Activated T-helper 1 cell treated with anti-CD3 and anti-CD28 coated beads, Interleukin-12 subunit alpha, Interleukin-12 subunit beta, Interleukin-2, Interleukin-4 antibody, amounts not matched to agents 30 ng/mL and 10 ng/mL and 1 ng/mL, durations not matched to agents 14 hours and 24 hours and 36 hours (primary cell): ENCODE measurements at regions of chr11 and their contacts with region 1.

Region 1: DNA sequence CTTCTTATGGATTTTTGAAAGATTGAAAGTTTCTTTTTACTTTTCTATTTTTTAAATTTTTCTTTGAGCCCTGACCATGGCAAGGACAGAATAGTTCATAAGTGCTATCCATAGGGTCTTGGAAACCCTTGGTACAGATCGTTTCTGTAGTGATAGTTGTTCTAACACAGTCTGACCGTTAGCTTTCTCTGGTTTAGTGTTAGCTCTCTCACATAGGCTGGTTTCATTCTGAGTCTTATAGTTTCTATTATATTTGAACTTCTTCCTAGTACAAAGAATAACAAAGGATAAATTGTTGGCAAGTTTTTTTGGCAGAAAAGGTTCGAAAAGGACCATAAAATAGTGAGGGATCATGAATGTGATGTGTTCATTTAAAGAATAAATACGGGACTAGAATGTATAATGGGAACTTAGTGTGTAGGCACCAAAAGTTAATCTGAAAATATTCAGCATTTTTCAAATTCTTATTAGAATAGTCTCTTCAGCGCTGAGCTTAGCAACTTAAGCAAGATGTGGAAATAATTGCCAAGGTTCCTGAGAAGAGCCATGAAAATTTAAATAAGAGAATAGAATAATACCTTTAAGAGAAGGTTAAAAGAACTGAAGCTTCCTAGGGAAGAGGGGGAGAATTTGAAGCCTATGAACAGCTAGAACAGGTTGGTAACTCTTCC is 24.1 kb downstream of the FDX1 start:
- DNase-seq: no peak
- H3K4me3 Mint-ChIP-seq: peak overlapping the region; percentile 17
- H3K27ac Mint-ChIP-seq: peak overlapping the region; percentile 51
- H3K4me1 Mint-ChIP-seq: peaks cover 52% of the 10 kb centered on the region
- H3K27me3 Mint-ChIP-seq: no peaks in the 10 kb centered on the region

Region 2: GRCh38 chr11:109960831-109961230 is 493.0 kb before region 1 on chr11:
- intact Hi-C with region 1: no loop called
- DNase-seq: no peak
- H3K4me3 Mint-ChIP-seq: no peak overlapping the region
- H3K27ac Mint-ChIP-seq: no peak overlapping the region
- H3K4me1 Mint-ChIP-seq: peaks cover 17% of the 10 kb centered on the region
- H3K27me3 Mint-ChIP-seq: peaks cover 10% of the 10 kb centered on the region

Region 3: DNA sequence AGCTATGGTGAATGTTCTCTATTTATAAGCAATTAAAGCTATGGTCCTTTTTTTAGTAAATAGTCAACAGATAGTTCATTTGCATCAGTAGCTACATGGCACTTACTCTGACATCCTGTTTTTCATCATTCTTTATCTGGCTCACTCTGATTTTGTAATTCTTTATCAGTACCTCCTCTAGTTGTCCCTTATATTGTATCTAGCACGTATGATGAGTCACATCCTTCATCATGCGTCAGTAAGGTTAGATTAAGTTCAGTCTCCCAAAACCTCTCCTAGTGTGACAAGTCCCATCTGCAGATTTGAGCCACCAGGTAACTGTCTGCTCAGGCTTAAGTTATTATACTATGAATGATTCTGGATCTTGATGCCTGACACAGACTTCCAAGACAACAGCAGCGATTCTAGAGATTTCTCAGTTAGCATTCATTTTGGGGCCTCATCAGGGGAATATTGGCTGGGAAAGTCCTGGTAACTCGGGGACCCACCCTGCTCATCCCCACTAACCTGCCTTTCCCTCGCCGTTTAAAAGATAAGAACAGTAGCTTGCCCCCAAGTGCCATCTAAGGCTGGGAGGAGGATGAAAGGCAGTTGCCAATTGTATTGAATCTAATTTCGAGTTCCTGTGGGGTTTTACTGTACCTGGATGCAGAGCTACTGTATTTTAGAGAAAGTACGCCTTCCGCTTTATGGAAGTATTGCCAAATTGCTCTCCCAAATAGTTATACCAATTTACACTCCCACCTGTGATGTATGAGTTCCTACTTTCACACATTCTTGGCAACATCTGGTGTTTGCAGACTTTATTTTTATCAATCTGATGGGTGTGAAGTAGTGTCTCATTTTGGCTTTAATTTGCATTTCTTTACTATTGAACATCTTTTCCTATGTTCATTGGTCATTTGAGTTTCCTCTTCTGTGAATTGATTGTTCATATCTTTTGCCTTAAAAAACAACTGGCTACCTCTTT is 304.8 kb before region 1 on chr11:
- intact Hi-C with region 1: no loop called
- DNase-seq: no peak
- H3K4me3 Mint-ChIP-seq: no peak overlapping the region
- H3K27ac Mint-ChIP-seq: no peak overlapping the region
- H3K4me1 Mint-ChIP-seq: no peaks in the 10 kb centered on the region
- H3K27me3 Mint-ChIP-seq: peaks cover 11% of the 10 kb centered on the region

Region 4: DNA sequence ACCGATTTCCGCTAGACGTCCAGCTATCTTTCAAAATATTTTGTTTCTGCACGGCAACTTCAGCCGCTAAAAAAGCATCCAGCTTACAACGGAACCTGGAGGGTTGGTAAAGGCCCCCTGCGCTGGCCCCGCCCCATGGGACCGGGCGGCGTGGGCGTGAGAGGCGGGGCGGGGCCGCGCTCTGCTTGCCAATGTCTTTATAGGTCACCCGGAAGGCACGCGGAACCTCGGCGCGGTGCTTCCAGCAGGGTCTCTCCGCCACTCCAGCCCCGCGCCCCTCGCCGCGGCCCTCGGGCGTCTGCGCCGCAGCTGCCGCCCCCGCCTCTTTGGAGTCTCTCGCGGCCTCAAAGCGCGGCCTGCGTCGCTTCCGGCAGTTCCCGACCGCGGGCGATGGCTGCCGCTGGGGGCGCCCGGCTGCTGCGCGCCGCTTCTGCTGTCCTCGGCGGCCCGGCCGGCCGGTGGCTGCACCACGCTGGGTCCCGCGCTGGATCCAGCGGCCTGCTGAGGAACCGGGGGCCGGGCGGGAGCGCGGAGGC is 24.0 kb before region 1 on chr11 and contains the start of gene FDX1:
- intact Hi-C with region 1: loop called (anchors 1 kb)
- DNase-seq: peak; percentile 82
- H3K4me3 Mint-ChIP-seq: peak within 1 kb of the TSS; percentile 99
- H3K27ac Mint-ChIP-seq: peak within 1 kb of the TSS; percentile 98
- H3K4me1 Mint-ChIP-seq: peaks cover 51% of the 10 kb centered on the region
- H3K27me3 Mint-ChIP-seq: no peaks in the 10 kb centered on the region
- total RNA-seq, gene FDX1: 14.2 and 15.9 TPM in 2 replicates

Region 5: DNA sequence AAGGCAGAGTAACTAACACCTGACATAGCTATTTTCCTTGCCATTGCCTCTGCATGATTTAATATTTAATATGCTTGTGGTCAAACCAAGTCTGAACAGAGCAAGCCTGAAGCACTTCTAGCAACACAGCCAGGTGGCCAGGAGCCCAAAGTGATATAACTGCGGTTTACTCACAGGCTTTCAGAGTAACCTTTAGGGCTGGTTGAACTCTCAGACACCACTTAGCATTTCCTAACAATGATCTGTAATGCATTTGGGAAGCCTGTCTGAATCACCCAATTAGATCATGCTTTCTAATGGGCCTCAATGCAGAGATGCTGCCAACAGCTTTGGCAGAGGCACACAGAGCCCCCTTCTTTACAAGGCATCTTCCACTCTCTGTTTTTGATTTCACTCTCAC is 72.1 kb after region 1 on chr11:
- intact Hi-C with region 1: loop called (anchors 5 kb)
- DNase-seq: no peak
- H3K4me3 Mint-ChIP-seq: no peak overlapping the region
- H3K27ac Mint-ChIP-seq: no peak overlapping the region
- H3K4me1 Mint-ChIP-seq: peaks cover 15% of the 10 kb centered on the region
- H3K27me3 Mint-ChIP-seq: no peaks in the 10 kb centered on the region

Region 6: DNA sequence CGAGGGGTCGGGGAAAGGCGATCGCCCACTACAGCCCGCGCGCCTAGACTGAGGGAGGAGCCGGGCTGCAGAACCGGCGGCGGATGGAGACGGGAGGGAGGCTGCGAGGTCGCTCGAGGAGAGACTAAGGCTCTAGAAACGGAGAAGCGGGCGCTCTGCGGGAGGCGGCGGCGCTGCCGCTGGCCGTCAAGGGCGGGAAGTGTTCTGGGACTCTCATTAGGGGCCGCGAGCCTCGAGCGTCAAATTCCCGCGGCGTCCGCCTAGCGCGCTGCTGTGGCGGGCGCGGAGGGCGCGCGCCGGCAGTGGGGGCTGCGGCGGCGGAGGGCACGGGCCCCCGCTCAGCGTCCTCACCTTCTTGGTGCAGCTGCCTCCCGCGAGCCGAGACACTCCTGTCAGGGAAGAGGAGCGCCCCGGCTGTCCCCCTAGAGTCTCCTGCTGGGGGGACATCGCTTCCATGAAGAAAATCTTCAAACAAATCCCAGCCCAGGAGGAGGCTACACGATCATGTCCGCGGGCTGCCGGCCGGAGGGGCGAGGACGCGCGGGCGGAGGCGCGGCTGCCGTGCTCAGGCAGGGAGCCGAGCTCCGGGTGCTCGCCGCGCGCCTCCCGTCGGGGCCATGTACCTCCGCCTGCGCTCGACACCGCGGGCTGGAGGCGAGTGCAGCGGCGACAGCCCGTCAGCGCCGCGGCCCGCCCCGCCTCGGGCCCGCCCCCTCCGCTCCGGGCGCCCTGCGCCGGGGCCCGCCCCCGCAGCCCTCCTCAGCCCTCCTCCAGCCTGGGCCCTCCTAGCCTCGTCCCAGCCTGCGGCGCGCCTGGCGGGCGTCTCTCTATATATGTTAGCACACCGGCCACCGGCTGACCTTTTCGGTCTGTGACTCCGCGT is 258.2 kb after region 1 on chr11 and contains the start of gene ARHGAP20:
- intact Hi-C with region 1: loop called (anchors 5 kb)
- DNase-seq: peak; percentile 29
- H3K4me3 Mint-ChIP-seq: peak within 1 kb of the TSS; percentile 46
- H3K27ac Mint-ChIP-seq: no peak within 1 kb of the TSS
- H3K4me1 Mint-ChIP-seq: peaks cover 13% of the 10 kb centered on the region
- H3K27me3 Mint-ChIP-seq: peaks cover 57% of the 10 kb centered on the region
- total RNA-seq, gene ARHGAP20: not detected in 2 replicates

Region 7: DNA sequence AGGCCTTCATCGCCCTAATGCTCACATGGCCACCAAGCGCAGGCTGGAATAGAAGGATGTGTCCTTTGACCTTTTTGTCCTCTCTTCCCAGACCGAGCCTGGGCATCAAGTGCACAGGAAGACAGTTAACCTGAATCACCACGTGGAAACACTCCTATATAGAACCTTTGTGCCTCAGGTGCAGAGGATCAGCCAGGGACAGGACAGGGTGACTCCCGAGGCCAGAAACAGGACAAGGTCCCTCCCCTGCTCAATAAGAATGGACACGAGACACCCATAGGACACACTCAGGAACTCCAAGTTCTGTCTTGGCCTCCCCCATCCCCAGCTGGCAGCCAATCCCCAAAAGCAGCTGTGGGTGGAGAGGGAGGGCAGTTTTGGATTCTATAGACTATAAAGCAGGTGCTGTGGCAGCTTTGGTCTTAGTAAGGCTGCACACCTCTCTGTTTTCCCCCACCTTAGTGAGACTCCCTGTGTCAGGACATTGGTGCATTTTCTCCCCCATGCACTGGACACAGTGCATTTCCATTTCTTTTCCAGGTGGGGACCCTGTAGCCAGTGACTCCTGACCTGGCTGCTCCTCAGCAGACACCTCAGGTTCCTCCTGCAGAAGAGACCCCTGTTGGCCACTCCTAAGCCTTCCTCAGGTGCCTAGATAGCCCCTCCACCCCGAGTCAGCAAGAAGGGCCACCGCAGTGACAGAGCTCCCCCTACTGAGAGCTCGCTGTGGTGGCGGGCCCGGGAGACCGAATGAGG is 968.9 kb after region 1 on chr11:
- intact Hi-C with region 1: loop called (anchors 10 kb)
- DNase-seq: peak; percentile 21
- H3K4me3 Mint-ChIP-seq: no peak overlapping the region
- H3K27ac Mint-ChIP-seq: peak overlapping the region; percentile 13
- H3K4me1 Mint-ChIP-seq: peaks cover 24% of the 10 kb centered on the region
- H3K27me3 Mint-ChIP-seq: no peaks in the 10 kb centered on the region

Region 8: DNA sequence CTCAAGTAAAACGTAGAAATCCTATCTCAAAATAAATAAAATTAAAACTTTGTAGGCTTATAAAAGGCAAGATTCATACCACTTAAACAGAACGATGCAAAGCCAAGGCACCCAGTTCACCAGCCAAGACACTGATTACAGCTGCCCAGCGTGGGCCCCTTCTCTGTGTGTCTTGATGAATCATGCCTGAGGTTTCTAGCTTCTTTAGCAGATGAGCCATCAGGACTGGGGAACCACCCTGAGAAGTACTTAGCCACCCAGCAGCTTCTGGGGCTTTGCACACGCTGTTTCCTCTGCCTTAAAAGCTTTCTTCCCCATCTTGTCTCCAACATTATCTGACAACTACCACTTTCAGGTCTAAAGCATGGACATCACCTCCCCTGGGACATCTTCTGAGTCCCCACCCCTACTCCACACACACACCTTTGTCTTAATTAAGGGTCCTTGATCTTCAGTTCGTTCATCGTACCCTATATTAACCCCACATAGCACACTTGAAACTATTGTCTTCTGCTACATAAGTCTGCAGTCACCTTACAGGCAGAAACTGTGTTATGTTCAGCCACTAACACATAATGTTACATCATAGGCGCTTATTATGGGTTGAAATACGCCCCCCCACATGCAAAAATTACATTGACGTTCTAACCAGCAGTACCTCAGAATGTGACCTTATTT is 1078.0 kb after region 1 on chr11:
- intact Hi-C with region 1: loop called (anchors 10 kb)
- DNase-seq: peak; percentile 52
- H3K4me3 Mint-ChIP-seq: no peak overlapping the region
- H3K27ac Mint-ChIP-seq: peak overlapping the region; percentile 56
- H3K4me1 Mint-ChIP-seq: peaks cover 31% of the 10 kb centered on the region
- H3K27me3 Mint-ChIP-seq: peaks cover 14% of the 10 kb centered on the region

Region 9: DNA sequence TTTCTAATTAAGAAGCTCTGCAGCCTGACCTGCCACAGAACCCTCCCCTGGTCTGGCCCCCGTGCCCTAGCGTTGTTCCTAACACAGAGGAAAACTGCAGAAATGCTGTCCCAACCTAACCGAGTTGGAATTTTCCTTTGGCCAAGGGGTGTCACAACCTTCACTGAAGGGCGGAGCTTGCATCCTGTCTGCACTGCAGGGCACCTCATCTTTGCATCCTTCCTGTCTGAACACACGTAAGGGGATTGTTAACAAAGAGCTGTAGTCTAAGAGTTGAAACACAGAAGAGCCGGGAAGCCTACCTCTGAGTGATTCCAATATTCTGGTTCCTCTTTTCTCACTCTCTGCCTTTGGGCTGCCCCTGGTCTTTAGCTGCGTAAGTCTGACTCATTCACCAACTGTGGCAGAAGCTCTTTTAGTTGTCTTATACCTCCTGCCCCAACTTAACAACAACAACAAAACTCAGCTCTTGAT is 1484.9 kb after region 1 on chr11:
- intact Hi-C with region 1: loop called (anchors 10 kb)
- DNase-seq: peak; percentile 22
- H3K4me3 Mint-ChIP-seq: peak overlapping the region; percentile 88
- H3K27ac Mint-ChIP-seq: peak overlapping the region; percentile 92
- H3K4me1 Mint-ChIP-seq: peaks cover 58% of the 10 kb centered on the region
- H3K27me3 Mint-ChIP-seq: no peaks in the 10 kb centered on the region